ENCODE measurements at regions of chr3 and their contacts with region 1.

Region 1: DNA sequence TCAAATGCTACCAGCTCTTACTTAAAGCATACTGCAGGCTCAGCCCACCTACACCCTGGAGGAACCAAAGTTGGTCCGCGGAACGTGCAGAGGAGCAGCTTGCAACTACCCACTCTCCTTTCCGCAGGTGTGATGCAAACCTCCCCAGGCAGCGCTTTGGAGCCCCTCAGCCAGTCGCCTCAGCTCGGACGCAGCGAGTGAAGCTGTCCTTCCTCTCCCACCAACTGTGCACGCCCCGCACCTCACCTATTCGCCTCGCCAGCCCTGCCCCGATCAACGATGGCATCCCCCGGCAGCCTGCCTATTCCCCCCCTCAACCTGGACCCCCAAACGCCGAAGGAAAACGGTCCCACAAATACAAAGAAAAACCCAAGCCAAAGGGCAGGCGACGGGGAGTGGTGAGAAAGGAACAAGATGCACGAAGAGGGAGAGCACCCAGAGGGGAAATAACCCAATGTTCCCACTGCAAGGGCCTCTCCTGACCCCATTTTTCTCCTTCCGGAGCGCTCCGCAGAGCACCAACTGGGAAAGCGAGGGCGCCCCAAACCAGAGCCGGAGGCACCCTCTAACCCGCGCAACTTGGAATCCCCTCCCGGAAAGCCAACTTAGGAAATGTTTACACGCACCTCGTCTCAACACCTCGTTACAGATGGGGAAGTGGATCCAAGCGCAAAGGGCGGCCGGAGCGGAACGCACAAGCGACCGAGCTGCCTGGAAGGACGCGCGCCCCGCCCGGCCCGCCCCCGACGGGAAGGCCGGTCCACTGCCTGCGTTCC is 665 bp downstream of the GLB1 start:
- DNase-seq: peak; percentile 18 to 45
- ATAC-seq: peak; percentile 63 to 70
- H3K4me3 ChIP-seq: peak overlapping the region; percentile 96
- H3K27ac ChIP-seq: peak overlapping the region; percentile 96 to 97
- H3K4me1 ChIP-seq: peaks cover 11% of the 10 kb centered on the region
- CTCF ChIP-seq: no peak
- EP300 ChIP-seq: no peak
- POLR2A ChIP-seq: no peak
- RAD21 ChIP-seq: no peak

Region 2: DNA sequence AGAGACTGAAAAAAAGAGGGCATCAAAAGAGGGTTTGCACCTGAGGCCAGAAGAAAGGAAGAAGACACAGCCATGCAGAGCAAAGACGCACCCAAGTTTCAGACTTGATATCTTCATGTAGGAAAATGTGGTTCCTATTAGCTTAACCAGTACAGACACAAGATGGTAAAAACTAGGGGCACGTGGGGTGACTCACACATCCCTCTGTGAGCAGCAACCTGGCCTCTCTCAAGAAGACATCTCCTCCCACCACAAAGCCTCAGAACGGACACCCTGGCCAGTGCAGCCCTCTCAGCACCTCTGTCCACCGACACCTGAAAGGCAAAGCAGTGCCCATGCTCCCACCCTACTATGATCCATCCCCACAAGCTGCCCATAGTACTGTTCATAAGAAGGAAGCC is 32.6 kb before region 1 on chr3:
- CTCF ChIA-PET with region 1: no interaction called
- POLR2A ChIA-PET with region 1: no interaction called
- DNase-seq: no peak
- ATAC-seq: no peak; a peak in 1 of 6 replicates
- H3K4me3 ChIP-seq: no peak overlapping the region
- H3K27ac ChIP-seq: no peak overlapping the region
- H3K4me1 ChIP-seq: no peaks in the 10 kb centered on the region
- CTCF ChIP-seq: no peak
- EP300 ChIP-seq: no peak
- POLR2A ChIP-seq: no peak
- RAD21 ChIP-seq: no peak

Region 3: DNA sequence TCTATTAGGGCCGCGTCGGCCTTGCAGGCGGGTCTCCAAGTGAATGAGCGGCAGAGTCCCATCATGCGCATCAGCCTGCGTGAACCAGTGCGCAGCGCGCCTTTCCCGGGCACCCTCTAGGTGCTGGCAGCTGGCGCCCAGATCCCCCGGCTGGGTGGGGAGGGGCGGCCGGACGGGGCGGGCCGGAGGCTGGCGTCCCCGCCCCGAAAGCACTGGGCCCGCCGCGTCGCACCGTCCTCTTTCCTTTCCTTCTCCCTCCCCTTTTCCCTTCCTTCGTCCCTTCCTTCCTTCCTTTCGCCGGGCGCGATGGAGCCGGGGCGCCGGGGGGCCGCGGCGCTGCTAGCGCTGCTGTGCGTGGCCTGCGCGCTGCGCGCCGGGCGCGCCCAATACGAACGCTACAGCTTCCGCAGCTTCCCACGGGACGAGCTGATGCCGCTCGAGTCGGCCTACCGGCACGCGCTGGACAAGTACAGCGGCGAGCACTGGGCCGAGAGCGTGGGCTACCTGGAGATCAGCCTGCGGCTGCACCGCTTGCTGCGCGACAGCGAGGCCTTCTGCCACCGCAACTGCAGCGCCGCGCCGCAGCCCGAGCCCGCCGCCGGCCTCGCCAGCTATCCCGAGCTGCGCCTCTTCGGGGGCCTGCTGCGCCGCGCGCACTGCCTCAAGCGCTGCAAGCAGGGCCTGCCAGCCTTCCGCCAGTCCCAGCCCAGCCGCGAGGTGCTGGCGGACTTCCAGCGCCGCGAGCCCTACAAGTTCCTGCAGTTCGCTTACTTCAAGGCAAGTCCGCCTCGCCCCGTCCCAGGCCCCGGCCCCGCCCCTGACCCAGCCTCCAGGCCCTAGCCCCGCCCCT is 17.7 kb after region 1 on chr3 and contains the start of gene CRTAP:
- CTCF ChIA-PET with region 1: interaction called, 3 read pairs
- POLR2A ChIA-PET with region 1: interaction called, 21 read pairs
- DNase-seq: peak; percentile 70 to 97
- ATAC-seq: peak; percentile 87 to 92
- H3K4me3 ChIP-seq: peak within 1 kb of the TSS; percentile 59
- H3K27ac ChIP-seq: peak within 1 kb of the TSS; percentile 82 to 96
- H3K4me1 ChIP-seq: peaks cover 15% of the 10 kb centered on the region
- CTCF ChIP-seq: no peak; the same call in 2 of the 3 replicates
- EP300 ChIP-seq: no peak
- POLR2A ChIP-seq: peak; percentile 71
- RAD21 ChIP-seq: no peak
- polyA plus RNA-seq, gene CRTAP: 355 and 384 TPM in 2 replicates